H1 (cell line): ENCODE measurements at regions of chr1 and their contacts with region 1.

Region 1: DNA sequence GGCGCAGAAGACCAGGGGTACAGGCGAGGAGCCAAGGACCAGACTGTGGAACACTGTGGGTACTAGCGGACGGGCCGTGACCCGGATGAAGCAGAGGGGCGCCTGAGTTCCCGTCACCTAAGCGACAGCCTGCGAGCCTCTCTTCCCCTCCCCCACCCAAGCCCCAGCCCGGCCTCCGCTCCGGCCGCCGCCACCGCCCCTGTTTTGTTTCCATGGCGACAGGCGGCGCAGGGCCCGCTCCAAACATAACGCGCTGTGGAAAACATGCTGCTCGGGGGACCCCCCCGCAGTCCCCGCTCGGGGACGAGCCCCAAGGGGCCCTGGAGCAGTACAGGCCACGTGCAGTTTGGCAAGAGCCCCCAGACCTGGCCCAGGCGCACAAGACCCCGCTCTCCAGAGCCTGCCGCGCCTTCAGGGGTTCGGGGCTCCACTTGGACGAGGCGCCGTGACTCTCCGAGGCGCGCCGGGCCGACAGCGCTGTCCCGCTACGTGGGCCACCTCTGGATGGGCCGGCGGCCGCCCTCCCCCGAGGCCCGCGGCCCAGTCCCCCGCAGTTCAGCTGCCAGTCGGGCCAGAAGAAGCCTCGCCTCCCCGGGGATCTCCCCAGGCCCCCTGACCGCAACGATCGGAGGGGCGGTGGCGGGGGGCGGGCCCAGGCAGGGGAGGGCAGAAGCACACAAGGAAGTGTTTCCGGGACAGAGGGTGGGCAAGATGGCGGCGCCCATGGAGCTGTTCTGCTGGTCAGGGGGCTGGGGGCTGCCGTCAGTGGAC is at the start of gene MTX1:
- DNase-seq: peak in 1 of 2 experiments; percentile 90
- H3K4me3 ChIP-seq: peak within 1 kb of the TSS; percentile 86 to 95 (median 94)
- H3K27ac ChIP-seq: peak within 1 kb of the TSS; percentile 85
- H3K4me1 ChIP-seq: peaks cover 3 to 20% (median 12%) of the 10 kb centered on the region in 4 experiments
- H3K27me3 ChIP-seq: peaks cover 0 to 3% (median 0%) of the 10 kb centered on the region in 4 experiments; a peak in 2 of 7 replicates
- CTCF ChIP-seq: no peak
- EP300 ChIP-seq: peak in 1 of 2 experiments; percentile 86; a peak in 1 of 3 replicates
- POLR2A ChIP-seq: peak in 1 of 2 experiments; percentile 74; a peak in 2 of 3 replicates
- RAD21 ChIP-seq: no peak
- total RNA-seq, gene MTX1: 47.9 and 55.0 TPM in 2 replicates

Region 2: DNA sequence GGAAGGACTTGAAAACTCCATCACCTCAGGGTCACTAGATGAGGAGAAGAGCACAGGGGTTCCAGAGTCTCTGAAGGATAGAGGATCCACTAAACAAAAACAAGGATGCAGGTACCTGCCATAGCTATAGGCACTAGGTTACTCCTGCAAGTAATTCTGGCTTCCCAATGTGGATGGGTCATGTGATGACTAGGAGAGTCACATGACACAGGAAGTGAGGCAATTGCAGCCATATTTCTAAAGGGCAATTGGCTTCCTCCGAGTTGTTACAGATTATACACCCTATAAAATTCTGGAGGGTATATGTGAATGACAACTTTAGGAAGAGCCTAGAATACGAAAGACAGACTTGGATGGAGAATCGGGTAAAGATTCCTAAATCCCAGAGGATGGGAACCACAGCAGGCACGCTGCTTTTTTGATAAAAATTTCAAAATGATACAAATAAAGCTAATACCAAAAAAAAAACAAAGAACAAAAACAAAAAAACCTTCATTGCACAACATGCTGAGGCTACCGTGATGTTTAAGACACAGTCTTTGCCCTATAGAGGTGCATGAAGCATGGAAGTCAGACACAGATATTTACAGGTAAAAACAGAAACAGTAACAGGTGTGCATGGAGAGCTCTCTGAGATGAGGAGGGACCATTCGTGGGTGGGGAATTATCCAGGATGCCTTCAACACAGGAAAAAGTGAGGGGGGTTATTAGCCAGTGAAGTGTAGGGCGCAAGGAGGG is 10.3 kb after region 1 on chr1:
- CTCF ChIA-PET with region 1: interaction called, 62 read pairs
- POLR2A ChIA-PET with region 1: interaction called, 235 read pairs
- DNase-seq: peak in 1 of 2 experiments; percentile 69
- H3K4me3 ChIP-seq: peak overlapping the region in 2 of 4 experiments; percentile 20 to 21; a peak in 2 of 8 replicates
- H3K27ac ChIP-seq: no peak overlapping the region
- H3K4me1 ChIP-seq: peaks cover 0 to 7% (median 0%) of the 10 kb centered on the region in 4 experiments; a peak in 1 of 7 replicates
- H3K27me3 ChIP-seq: no peaks in the 10 kb centered on the region
- CTCF ChIP-seq: no peak
- EP300 ChIP-seq: peak in 1 of 2 experiments; percentile 61; a peak in 1 of 3 replicates
- POLR2A ChIP-seq: no peak
- RAD21 ChIP-seq: no peak

Region 3: GRCh38 chr1:155227261-155228095 is 18.8 kb after region 1 on chr1:
- CTCF ChIA-PET with region 1: interaction called, 62 read pairs
- POLR2A ChIA-PET with region 1: interaction called, 235 read pairs
- DNase-seq: peak; percentile 95 to 96
- H3K4me3 ChIP-seq: peak overlapping the region; percentile 67 to 92 (median 82)
- H3K27ac ChIP-seq: peak overlapping the region; percentile 91
- H3K4me1 ChIP-seq: peaks cover 0 to 14% (median 4%) of the 10 kb centered on the region in 4 experiments; a peak in 5 of 7 replicates
- H3K27me3 ChIP-seq: peaks cover 0 to 2% (median 0%) of the 10 kb centered on the region in 4 experiments; a peak in 1 of 7 replicates
- CTCF ChIP-seq: peak in 2 of 3 experiments; percentile 14 to 17; a peak in 2 of 4 replicates
- EP300 ChIP-seq: no peak
- POLR2A ChIP-seq: peak; percentile 76 to 91
- RAD21 ChIP-seq: no peak

Region 4: DNA sequence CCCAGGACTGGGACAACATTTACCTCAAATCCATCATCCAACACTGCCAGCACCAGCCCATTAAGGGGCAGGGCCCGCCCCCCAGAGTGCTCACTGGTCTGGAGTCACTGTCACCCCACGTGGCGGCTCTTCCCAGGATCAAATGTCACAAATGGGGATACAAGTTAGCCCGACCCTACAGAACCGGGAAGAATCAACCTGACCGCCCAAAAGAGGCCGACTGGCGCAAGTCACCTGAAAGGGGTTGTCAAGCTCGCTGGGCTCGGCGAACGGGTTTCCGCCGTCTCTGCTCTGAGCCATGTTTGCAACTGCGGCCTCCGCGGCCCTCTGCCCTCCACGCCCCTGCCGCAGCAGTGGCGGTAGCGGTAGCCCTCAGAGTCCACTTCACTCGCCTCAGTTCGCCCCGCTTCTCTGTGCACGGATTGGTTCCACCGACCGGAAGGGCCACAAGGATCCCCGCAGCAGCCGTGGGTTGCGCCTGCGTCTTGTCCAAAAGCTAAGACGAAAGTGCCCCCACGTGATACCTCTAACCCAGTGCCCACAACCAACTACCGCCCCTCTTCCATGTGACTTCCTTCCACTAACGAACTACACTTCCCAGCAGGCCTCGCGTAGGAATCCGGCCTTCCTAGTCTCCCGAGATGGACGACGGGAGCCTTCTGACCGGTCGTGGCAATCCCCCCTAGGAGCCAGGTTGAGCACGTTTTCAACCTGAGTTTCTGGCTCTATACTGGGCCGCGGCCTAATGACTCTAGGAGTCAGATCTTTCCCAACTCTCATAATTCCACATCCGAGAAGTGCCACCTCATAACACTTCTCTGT is 53.3 kb after region 1 on chr1 and contains the start of gene SCAMP3:
- CTCF ChIA-PET with region 1: interaction called, 10 read pairs
- POLR2A ChIA-PET with region 1: interaction called, 12 read pairs
- DNase-seq: peak; percentile 90 to 95
- H3K4me3 ChIP-seq: peak within 1 kb of the TSS; percentile 71 to 89 (median 76)
- H3K27ac ChIP-seq: peak within 1 kb of the TSS; percentile 27; the same call in 1 of the 2 replicates
- H3K4me1 ChIP-seq: peaks cover 0 to 8% (median 4%) of the 10 kb centered on the region in 4 experiments; a peak in 3 of 7 replicates
- H3K27me3 ChIP-seq: no peaks in the 10 kb centered on the region
- CTCF ChIP-seq: no peak
- EP300 ChIP-seq: no peak
- POLR2A ChIP-seq: peak; percentile 59 to 94
- RAD21 ChIP-seq: no peak
- total RNA-seq, gene SCAMP3: 48.9 and 50.0 TPM in 2 replicates

Region 5: DNA sequence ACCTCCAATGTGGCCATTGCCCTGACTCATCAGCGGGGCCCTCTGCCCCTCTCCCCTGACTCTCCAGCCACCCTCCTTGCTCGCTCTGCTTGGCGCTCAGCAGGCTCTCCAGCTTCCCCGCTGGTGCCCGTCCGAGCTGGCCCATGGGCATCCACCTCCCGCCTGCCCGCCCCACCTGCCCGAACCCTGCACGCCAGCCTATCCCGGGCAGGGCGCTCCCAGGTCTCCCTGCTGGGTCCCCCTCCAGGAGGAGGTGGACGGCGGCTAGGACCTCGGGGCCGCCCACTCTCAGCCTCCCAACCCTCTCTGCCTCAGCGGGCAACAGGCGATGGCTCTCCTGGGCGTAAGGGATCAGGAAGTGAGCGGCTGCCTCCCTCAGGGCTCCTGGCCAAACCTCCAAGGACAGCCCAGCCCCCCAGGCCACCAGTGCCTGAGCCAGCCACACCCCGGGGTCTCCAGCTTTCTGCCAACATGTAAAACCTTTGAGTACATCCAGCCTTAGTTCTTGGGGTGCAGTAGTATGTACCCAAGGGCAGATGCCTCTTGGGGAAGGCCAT is 79.3 kb after region 1 on chr1:
- CTCF ChIA-PET with region 1: no interaction called
- POLR2A ChIA-PET with region 1: no interaction called
- DNase-seq: no peak
- H3K4me3 ChIP-seq: no peak overlapping the region
- H3K27ac ChIP-seq: no peak overlapping the region
- H3K4me1 ChIP-seq: no peaks in the 10 kb centered on the region
- H3K27me3 ChIP-seq: no peaks in the 10 kb centered on the region
- CTCF ChIP-seq: no peak
- EP300 ChIP-seq: no peak
- POLR2A ChIP-seq: no peak
- RAD21 ChIP-seq: no peak